Natural killer cell (primary cell): ENCODE measurements at regions of chr10 and their contacts with region 1.

Region 1: GRCh38 chr10:101042667-101043355 is 11.8 kb downstream of the SFXN3 start:
- DNase-seq: peak; percentile 76 to 88
- ATAC-seq: peak; percentile 84
- H3K4me3 ChIP-seq: peak overlapping the region; percentile 73
- H3K4me3 Mint-ChIP-seq: peak overlapping the region; percentile 95
- H3K27ac ChIP-seq: peak overlapping the region; percentile 64
- H3K27ac Mint-ChIP-seq: peak overlapping the region; percentile 89 to 97
- H3K4me1 ChIP-seq: peaks cover 18% of the 10 kb centered on the region
- H3K4me1 Mint-ChIP-seq: peaks cover 25 to 29% of the 10 kb centered on the region in 2 donors
- H3K27me3 ChIP-seq: peaks cover 12% of the 10 kb centered on the region
- H3K27me3 Mint-ChIP-seq: peaks cover 15 to 17% of the 10 kb centered on the region in 2 donors
- CTCF ChIP-seq: no peak

Region 2: GRCh38 chr10:101060036-101060950 is 17.5 kb after region 1 on chr10:
- intact Hi-C with region 1: loop called (anchors 2 kb)
- DNase-seq: peak; percentile 92 to 94
- ATAC-seq: peak; percentile 65 to 82 (median 71)
- H3K4me3 ChIP-seq: peak overlapping the region; percentile 82
- H3K4me3 Mint-ChIP-seq: peak overlapping the region; percentile 97
- H3K27ac ChIP-seq: peak overlapping the region; percentile 81
- H3K27ac Mint-ChIP-seq: peak overlapping the region; percentile 86 to 96
- H3K4me1 ChIP-seq: peaks cover 36% of the 10 kb centered on the region
- H3K4me1 Mint-ChIP-seq: peaks cover 25 to 37% of the 10 kb centered on the region in 2 donors
- H3K27me3 ChIP-seq: peaks cover 22% of the 10 kb centered on the region
- H3K27me3 Mint-ChIP-seq: peaks cover 16% of the 10 kb centered on the region in 2 donors
- CTCF ChIP-seq: peak; percentile 98

Region 3: GRCh38 chr10:101067356-101068083 is 24.7 kb after region 1 on chr10:
- intact Hi-C with region 1: loop called (anchors 1 kb)
- DNase-seq: peak; percentile 64 to 89
- ATAC-seq: peak; percentile 73 to 85 (median 79)
- H3K4me3 ChIP-seq: peak overlapping the region; percentile 43
- H3K4me3 Mint-ChIP-seq: peak overlapping the region; percentile 88
- H3K27ac ChIP-seq: no peak overlapping the region
- H3K27ac Mint-ChIP-seq: peak overlapping the region in 1 of 2 donors; percentile 17
- H3K4me1 ChIP-seq: peaks cover 43% of the 10 kb centered on the region
- H3K4me1 Mint-ChIP-seq: peaks cover 5 to 33% of the 10 kb centered on the region in 2 donors
- H3K27me3 ChIP-seq: peaks cover 41% of the 10 kb centered on the region
- H3K27me3 Mint-ChIP-seq: peaks cover 40 to 45% of the 10 kb centered on the region in 2 donors
- CTCF ChIP-seq: peak; percentile 92

Region 4: GRCh38 chr10:101141616-101142532 is 99.1 kb after region 1 on chr10:
- intact Hi-C with region 1: loop called (anchors 2 kb)
- DNase-seq: peak; percentile 74 to 88
- ATAC-seq: peak; percentile 84 to 95 (median 94)
- H3K4me3 ChIP-seq: no peak overlapping the region
- H3K4me3 Mint-ChIP-seq: no peak overlapping the region
- H3K27ac ChIP-seq: no peak overlapping the region
- H3K27ac Mint-ChIP-seq: no peak overlapping the region
- H3K4me1 ChIP-seq: peaks cover 19% of the 10 kb centered on the region
- H3K4me1 Mint-ChIP-seq: peaks cover 0 to 5% of the 10 kb centered on the region in 2 donors
- H3K27me3 ChIP-seq: peaks cover 64% of the 10 kb centered on the region
- H3K27me3 Mint-ChIP-seq: peaks cover 59 to 76% of the 10 kb centered on the region in 2 donors
- CTCF ChIP-seq: peak; percentile 95